Activated CD4-positive, alpha-beta T cell treated with anti-CD3 and anti-CD28 coated beads for 36 hours (primary cell): ENCODE measurements at regions of chr19 and their contacts with region 1.

Region 1: DNA sequence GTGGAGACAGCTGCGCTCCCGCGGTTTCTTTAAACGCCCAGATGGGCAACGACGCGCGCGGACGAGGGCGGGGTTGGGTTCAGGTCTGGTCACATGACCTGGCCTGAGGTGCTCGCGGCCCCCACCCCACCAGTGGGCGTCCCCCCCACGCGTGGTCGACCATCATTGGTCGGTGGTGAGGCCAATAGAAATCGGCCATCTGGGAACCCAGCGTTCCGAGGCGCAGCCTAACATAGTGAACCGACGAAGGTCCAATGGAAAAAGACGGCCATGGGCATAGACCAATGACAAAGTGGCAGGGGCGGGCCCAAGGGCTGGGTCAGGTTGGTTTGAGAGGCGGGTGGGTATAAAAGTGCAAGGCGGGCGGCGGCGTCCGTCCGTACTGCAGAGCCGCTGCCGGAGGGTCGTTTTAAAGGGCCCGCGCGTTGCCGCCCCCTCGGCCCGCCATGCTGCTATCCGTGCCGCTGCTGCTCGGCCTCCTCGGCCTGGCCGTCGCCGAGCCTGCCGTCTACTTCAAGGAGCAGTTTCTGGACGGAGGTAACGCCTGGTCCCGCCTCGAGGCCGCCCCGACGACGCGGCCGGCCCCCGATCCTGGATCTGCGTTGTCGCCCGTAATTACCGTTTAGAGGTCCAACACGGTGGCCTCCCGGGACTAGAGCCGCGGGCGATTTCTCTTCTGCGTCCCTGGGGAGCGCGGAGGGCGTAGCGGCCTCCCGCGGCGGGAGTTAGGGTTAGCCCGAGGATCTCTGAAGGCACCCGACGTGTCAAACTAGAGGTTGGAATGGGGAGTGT is at the start of gene CALR:
- DNase-seq: peak; percentile 99
- ATAC-seq: peak; percentile 89
- H3K4me3 Mint-ChIP-seq: peak within 1 kb of the TSS; percentile 99
- H3K27ac Mint-ChIP-seq: peak within 1 kb of the TSS; percentile 96
- H3K4me1 Mint-ChIP-seq: peaks cover 59% of the 10 kb centered on the region
- H3K27me3 Mint-ChIP-seq: no peaks in the 10 kb centered on the region
- total RNA-seq, gene CALR: 557 to 569 TPM

Region 2: DNA sequence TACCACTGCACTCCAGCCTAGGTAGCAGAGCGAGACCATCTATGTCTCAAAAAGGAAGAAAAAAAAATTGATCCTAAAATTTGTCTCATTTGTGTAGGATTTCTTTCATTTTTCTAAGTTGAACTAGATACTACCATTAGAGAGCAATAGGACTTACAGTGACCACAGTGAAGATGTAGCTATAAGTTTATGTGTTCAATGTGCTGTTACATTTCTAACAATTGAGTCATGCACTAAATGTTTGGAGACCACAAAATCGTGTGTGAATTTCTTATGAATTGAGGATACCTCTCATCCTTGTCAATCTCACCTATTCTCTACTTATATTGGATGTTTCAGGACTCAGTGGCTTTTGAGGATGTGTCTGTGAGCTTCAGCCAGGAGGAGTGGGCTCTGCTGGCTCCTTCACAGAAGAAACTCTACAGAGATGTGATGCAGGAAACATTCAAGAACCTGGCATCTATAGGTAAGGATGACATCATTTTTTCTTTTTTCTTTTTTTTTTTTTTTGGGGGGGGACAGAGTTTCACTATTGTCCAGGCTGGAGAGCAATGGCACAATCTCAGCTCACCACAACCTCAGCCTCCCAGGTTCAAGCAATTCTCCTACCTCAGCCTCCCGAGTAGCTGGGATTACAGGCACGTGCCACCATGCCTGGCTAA is 314.9 kb before region 1 on chr19:
- CTCF ChIA-PET with region 1: no interaction called
- POLR2A ChIA-PET with region 1: no interaction called
- intact Hi-C with region 1: no loop called
- DNase-seq: no peak
- ATAC-seq: no peak
- H3K4me3 Mint-ChIP-seq: no peak overlapping the region
- H3K27ac Mint-ChIP-seq: no peak overlapping the region
- H3K4me1 Mint-ChIP-seq: peaks cover 3% of the 10 kb centered on the region
- H3K27me3 Mint-ChIP-seq: no peaks in the 10 kb centered on the region

Region 3: GRCh38 chr19:12782229-12783028 is 156.0 kb before region 1 on chr19:
- CTCF ChIA-PET with region 1: interaction called, 3 read pairs
- POLR2A ChIA-PET with region 1: no interaction called
- intact Hi-C with region 1: loop called in 1 of 2 experiments (anchors 2 kb)
- DNase-seq: peak; percentile 95
- ATAC-seq: peak; percentile 40
- H3K4me3 Mint-ChIP-seq: peak overlapping the region; percentile 74
- H3K27ac Mint-ChIP-seq: peak overlapping the region; percentile 98
- H3K4me1 Mint-ChIP-seq: peaks cover 33% of the 10 kb centered on the region
- H3K27me3 Mint-ChIP-seq: no peaks in the 10 kb centered on the region

Region 4: GRCh38 chr19:12956446-12957388 is 18.3 kb after region 1 on chr19 and contains the start of gene GADD45GIP1:
- CTCF ChIA-PET with region 1: no interaction called
- POLR2A ChIA-PET with region 1: no interaction called
- intact Hi-C with region 1: loop called (anchors 1 to 2 kb)
- DNase-seq: peak; percentile 91
- ATAC-seq: peak; percentile 93
- H3K4me3 Mint-ChIP-seq: peak within 1 kb of the TSS; percentile 91
- H3K27ac Mint-ChIP-seq: peak within 1 kb of the TSS; percentile 97
- H3K4me1 Mint-ChIP-seq: peaks cover 32% of the 10 kb centered on the region
- H3K27me3 Mint-ChIP-seq: no peaks in the 10 kb centered on the region
- total RNA-seq, gene GADD45GIP1: 31.1 to 36.3 TPM

Region 5: GRCh38 chr19:13116282-13117175 is 178.1 kb after region 1 on chr19 and contains the start of gene TRMT1:
- CTCF ChIA-PET with region 1: no interaction called
- POLR2A ChIA-PET with region 1: no interaction called
- intact Hi-C with region 1: no loop called
- DNase-seq: peak; percentile 96
- ATAC-seq: peak; percentile 55
- H3K4me3 Mint-ChIP-seq: peak within 1 kb of the TSS; percentile 87
- H3K27ac Mint-ChIP-seq: peak within 1 kb of the TSS; percentile 95
- H3K4me1 Mint-ChIP-seq: peaks cover 36% of the 10 kb centered on the region
- H3K27me3 Mint-ChIP-seq: no peaks in the 10 kb centered on the region
- total RNA-seq, gene TRMT1: 73.0 to 96.1 TPM